AG04449 (cell line): ENCODE measurements at regions of chr1 and their contacts with region 1.

Region 1: GRCh38 chr1:53413175-53414001 is 45.8 kb upstream of the DMRTB1 start:
- DNase-seq: peak; percentile 74
- H3K4me3 ChIP-seq: no peak overlapping the region
- CTCF ChIP-seq: no peak

Region 2: DNA sequence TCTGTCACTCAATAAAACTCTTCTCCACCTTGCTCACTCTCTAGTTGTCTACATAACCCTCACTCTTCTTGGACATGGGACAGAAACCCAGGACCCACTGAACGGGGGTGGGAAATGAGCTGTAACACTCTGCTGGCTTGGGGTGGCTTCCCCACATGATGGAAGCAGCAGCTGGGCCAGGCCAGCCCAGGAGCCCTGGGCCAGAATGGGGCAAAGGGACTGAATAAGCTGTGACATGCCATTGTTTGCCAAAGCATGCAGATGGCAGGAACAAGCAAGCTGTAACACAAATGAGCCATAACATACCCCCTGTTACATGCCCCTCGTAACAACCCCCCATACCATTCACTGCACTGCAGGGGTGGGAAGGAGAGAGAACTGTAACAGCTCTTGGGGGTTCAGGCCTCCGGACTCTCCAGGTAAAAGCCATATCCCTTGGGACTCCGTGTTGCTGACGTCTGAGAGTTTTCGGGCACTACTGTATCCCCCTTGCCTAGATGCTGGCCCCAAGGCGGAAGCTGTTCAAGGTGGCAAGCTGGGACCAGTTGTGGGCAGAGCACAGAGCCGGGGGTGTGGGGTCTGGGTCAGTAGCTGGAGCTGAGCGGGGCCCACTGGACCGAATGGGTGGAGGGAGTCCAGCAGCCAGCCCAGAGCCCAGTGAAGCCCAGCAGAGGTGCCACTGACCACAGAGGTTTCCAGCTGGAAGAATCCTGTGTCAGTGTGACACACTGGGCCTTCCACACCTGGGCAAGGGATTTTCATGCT is 10.3 kb before region 1 on chr1:
- CTCF ChIA-PET with region 1: interaction called, 17 read pairs
- POLR2A ChIA-PET with region 1: no interaction called
- DNase-seq: no peak
- H3K4me3 ChIP-seq: no peak overlapping the region
- CTCF ChIP-seq: no peak